ENCODE measurements at regions of chr21 and their contacts with region 1.

Region 1: DNA sequence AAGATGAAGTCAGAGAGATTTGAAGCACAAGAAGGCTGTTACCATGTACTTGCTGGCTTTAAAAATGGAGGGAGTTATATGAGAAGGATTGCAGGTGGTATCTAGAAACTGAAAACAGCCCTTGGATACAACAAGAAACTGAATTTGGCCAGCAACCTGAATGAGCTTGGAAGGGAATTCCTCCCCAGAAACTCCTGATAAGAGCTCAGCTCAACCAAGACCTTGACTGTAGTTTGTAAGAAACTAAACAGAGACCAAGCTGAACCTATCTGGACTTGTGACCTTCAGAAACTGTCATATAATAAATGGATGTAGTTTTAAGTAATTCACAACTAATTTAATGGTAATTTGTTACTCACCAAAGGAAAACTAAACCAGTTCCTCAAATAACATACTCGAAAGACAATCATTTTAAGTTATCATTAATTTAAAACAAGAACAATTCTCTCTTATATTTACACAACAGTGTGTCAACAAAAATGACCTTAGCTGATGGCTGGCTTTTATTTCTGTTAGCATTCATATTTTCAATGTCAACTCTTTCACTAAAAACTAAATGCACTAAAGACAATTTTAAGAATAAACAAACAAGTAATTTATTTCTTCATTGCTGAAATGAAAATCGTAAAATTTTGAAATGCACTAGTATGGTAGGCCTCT is 1218.4 kb upstream of the TMPRSS15 start:
- DNase-seq: no peak
- ATAC-seq: no peak
- H3K4me3 ChIP-seq: no peak overlapping the region
- H3K27ac ChIP-seq: no peak overlapping the region
- H3K4me1 ChIP-seq: no peaks in the 10 kb centered on the region
- H3K27me3 ChIP-seq: no peaks in the 10 kb centered on the region
- CTCF ChIP-seq: no peak
- EP300 ChIP-seq: no peak
- POLR2A ChIP-seq: no peak
- RAD21 ChIP-seq: no peak

Region 2: DNA sequence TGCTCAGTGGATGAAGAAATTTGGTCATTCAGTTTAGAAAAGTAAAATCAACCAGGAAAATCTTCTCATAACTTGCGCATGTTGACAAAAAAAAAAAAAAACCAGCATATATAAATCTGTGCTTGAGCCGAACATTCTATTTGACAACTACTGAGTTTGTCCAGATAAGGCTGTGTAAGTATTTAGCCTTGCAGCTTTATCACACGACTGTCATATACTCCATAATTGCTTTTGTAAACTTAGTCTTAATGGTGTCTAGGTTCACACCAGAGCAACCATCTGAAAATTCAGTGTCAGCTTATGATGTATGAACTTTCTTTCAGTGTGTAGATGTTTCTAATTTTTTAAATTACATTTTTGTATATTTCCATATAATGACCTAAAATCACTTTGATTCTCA is 44.6 kb before region 1 on chr21:
- CTCF ChIA-PET with region 1: no interaction called
- POLR2A ChIA-PET with region 1: no interaction called
- RAD21 ChIA-PET with region 1: no interaction called
- SMC1A ChIA-PET with region 1: no interaction called
- in situ Hi-C with region 1: no loop called
- intact Hi-C with region 1: no loop called
- DNase-seq: no peak
- ATAC-seq: no peak
- H3K4me3 ChIP-seq: no peak overlapping the region
- H3K27ac ChIP-seq: no peak overlapping the region
- H3K4me1 ChIP-seq: no peaks in the 10 kb centered on the region
- H3K27me3 ChIP-seq: no peaks in the 10 kb centered on the region
- CTCF ChIP-seq: no peak
- EP300 ChIP-seq: no peak
- POLR2A ChIP-seq: no peak
- RAD21 ChIP-seq: no peak

Region 3: GRCh38 chr21:19608101-19608621 is 13.8 kb before region 1 on chr21:
- CTCF ChIA-PET with region 1: interaction called, 4 read pairs
- POLR2A ChIA-PET with region 1: no interaction called
- RAD21 ChIA-PET with region 1: no interaction called
- SMC1A ChIA-PET with region 1: interaction called, 10 read pairs
- in situ Hi-C with region 1: no loop called
- intact Hi-C with region 1: no loop called
- DNase-seq: no peak
- ATAC-seq: no peak; the same call in 2 of the 3 replicates
- H3K4me3 ChIP-seq: no peak overlapping the region
- H3K27ac ChIP-seq: no peak overlapping the region
- H3K4me1 ChIP-seq: no peaks in the 10 kb centered on the region
- H3K27me3 ChIP-seq: no peaks in the 10 kb centered on the region
- CTCF ChIP-seq: no peak
- EP300 ChIP-seq: no peak
- POLR2A ChIP-seq: no peak
- RAD21 ChIP-seq: no peak

Region 4: GRCh38 chr21:19640964-19641363 is 19.0 kb after region 1 on chr21:
- CTCF ChIA-PET with region 1: no interaction called
- POLR2A ChIA-PET with region 1: no interaction called
- RAD21 ChIA-PET with region 1: no interaction called
- SMC1A ChIA-PET with region 1: no interaction called
- in situ Hi-C with region 1: no loop called
- intact Hi-C with region 1: no loop called
- DNase-seq: no peak
- ATAC-seq: no peak
- H3K4me3 ChIP-seq: no peak overlapping the region
- H3K27ac ChIP-seq: no peak overlapping the region
- H3K4me1 ChIP-seq: no peaks in the 10 kb centered on the region
- H3K27me3 ChIP-seq: no peaks in the 10 kb centered on the region
- CTCF ChIP-seq: no peak
- EP300 ChIP-seq: no peak
- POLR2A ChIP-seq: no peak
- RAD21 ChIP-seq: no peak

Measured in GM12878 (cell line).